Activated T-helper 2 cell treated with anti-CD3 and anti-CD28 coated beads, Interferon-gamma antibody, Interleukin-2, Interleukin-4, amounts not matched to agents 10 μg/mL and 5 μg/mL and 100 μg/mL, durations not matched to agents 14 hours and 24 hours and 36 hours (primary cell): ENCODE measurements at regions of chr9 and their contacts with region 1.

Region 1: DNA sequence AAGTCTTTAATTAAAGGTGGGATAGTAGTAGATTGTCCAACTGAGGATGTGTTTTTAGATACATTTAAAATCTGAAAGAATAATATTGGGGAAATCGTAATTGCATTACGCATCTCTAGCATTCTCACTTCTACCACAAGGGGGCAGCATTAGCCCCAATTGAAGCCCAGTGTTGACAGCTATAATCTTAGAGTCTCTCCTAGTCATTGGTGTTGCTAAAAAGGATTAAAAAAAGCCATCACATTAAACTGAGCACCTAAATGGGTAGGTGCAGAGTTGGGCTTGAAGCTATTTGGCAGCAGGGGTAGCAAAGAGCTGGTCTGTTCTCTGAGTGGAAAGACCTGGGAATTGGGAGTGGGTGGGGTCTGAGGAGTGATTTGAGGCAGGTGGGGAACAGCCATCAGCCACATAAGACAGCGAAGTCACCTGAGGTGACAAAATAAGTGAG is 177.2 kb downstream of the OSTF1 start:
- DNase-seq: peak; percentile 12
- H3K4me3 Mint-ChIP-seq: no peak overlapping the region
- H3K27ac Mint-ChIP-seq: no peak overlapping the region
- H3K4me1 Mint-ChIP-seq: no peaks in the 10 kb centered on the region
- H3K27me3 Mint-ChIP-seq: no peaks in the 10 kb centered on the region

Region 2: DNA sequence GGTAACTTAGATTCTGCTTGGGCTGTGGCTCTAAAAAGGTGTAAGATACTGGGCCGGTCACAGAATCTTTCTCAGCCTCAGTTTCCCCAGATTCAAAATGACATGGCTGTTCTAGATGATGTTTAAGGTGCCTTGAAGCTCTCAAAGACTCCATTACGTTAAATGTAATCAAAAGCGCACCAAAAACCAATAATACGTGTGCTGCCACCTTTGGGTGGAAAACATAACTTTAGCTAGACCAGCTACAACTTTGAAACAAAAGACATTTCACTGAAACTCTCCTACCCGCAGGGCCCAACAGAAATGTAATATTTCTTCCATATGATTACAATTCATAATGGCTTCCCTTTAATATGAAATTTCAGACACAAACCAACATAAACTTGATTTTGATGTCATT is 590.0 kb after region 1 on chr9:
- intact Hi-C with region 1: loop called (anchors 10 kb)
- DNase-seq: no peak
- H3K4me3 Mint-ChIP-seq: no peak overlapping the region
- H3K27ac Mint-ChIP-seq: no peak overlapping the region
- H3K4me1 Mint-ChIP-seq: no peaks in the 10 kb centered on the region
- H3K27me3 Mint-ChIP-seq: peaks cover 4% of the 10 kb centered on the region

Region 3: DNA sequence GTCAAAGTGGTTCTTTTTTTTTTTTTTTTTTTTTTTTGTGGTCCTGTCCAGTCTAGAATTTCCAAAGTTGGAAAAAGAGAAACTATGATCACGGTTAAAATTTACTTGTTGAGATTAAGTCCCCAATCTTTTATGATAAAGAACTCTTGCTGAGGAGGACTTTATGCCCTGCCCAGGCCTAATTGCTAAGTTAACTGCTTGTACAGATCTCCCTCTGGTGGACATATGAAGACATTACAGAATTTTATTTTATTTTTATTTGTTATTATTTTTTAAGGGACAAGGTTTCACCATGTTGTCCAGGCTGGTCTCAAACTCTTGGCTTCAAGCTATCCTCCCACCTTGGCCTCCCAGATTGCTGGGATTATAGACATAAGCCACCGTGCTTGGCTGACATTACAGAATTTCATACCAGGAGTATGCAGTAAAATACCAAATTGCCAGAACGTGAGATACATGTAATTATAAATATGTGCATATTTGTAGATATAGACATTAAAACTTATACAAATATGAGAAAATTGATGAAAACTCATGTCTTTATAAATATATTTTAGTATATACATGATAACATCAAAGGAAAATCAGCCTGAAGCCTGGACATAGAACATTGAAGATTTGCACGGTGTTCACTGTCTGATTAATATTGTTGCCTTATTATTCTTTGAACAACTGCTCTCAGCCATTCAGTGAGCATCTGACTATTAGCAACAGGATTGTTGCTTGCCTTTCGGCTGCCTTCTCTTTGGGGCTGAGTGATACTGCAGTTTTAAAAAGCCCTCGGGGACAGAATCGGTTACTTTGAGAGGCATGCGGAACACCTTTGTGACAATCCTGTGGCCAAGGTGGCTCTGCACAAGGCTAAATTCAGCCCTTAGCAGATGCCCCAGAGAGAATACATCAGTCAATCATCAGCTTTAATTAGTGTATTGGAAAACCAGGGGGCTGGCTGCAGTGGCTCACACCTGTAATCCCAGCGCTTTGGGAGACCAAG is 1037.7 kb after region 1 on chr9:
- intact Hi-C with region 1: loop called (anchors 2 kb)
- DNase-seq: no peak
- H3K4me3 Mint-ChIP-seq: no peak overlapping the region
- H3K27ac Mint-ChIP-seq: no peak overlapping the region
- H3K4me1 Mint-ChIP-seq: no peaks in the 10 kb centered on the region
- H3K27me3 Mint-ChIP-seq: no peaks in the 10 kb centered on the region